ENCODE measurements at regions of chr7 and their contacts with region 1.

Region 1: GRCh38 chr7:150567169-150567568 is at the start of gene GIMAP4:
- DNase-seq: no peak
- total RNA-seq, gene GIMAP4: 18.2 TPM

Region 2: DNA sequence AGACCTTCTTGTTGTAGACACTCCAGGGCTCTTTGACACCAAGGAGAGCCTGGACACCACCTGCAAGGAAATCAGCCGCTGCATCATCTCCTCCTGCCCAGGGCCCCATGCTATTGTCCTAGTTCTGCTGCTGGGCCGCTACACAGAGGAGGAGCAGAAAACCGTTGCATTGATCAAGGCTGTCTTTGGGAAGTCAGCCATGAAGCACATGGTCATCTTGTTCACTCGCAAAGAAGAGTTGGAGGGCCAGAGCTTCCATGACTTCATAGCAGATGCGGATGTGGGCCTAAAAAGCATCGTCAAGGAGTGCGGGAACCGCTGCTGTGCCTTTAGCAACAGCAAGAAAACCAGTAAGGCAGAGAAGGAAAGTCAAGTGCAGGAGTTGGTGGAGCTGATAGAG is 47.0 kb before region 1 on chr7:
- intact Hi-C with region 1: loop called (anchors 5 kb)
- DNase-seq: no peak

Region 3: DNA sequence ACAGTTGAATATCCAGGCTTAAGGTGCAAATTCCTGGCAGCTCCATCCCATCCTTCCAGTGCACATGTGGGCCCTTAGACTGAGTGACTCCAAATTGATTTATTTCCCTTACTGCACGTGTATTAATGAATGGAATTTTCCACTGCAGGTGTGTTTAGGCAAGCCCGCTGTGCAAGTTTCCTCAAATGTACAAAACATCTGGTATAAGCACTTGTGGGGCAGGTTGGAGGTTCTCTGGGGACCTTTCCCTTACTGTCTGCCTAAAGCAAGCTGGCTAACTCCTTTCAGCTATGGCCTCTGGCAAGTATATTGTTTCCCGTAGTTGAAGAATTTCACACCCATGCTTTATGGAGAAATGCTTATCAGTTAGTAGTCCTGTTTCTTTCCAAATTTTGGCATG is 90.4 kb after region 1 on chr7:
- intact Hi-C with region 1: no loop called
- DNase-seq: no peak

Region 4: DNA sequence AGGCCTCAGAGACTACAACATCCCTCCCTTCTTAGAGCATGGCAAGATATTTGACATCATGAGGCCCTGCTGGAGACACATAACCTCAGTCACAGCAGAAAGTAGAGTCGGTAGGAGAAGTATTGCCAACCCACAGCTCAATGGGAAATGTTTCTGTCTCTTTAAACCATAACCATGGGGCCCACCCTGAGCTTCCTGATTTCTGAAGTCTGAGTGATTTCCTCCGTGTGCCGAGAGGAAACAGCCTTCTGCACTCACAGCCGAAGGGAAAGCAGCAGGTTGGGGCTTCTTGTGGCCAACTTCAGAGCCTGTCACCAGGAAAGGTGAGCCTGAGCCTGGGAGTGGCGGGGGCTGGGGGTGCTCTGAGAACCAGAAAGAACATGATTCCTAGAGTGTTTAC is 149.2 kb after region 1 on chr7 and contains the start of gene GIMAP1:
- intact Hi-C with region 1: loop called (anchors 5 kb)
- DNase-seq: peak; percentile 79
- total RNA-seq, gene GIMAP1: 3.5 TPM